Breast epithelium (tissue), 4 donors: ENCODE measurements at regions of chr6 and their contacts with region 1.

Region 1: GRCh38 chr6:119575721-119576120 is 226.2 kb upstream of the MAN1A1 start:
- DNase-seq: no peak
- H3K4me3 ChIP-seq: no peak overlapping the region
- H3K27ac ChIP-seq: no peak overlapping the region
- H3K4me1 ChIP-seq: no peaks in the 10 kb centered on the region
- H3K27me3 ChIP-seq: no peaks in the 10 kb centered on the region
- CTCF ChIP-seq: no peak
- POLR2A ChIP-seq: no peak

Region 2: DNA sequence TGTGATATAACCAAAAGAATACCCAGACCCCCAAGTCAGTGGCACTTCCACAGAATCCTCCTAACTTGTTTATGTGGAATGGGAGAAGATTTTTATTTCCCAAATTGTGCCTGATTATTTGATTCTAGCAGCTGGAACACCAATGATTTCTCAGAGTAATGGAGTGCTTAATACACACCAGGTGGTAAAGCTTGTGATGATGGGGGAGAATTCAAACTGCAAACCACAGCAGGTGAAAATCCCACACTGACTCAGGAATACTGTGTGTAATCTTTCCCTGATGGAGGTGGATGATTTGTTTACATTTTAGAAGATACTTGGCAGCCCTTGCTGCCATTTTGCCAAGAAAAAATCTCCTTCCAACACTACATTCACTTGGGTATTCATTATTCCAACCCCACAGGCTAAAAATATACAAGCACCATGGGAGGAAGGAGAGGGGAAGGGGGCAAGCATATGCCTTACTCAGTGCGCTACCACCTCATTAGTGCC is 1240.3 kb before region 1 on chr6:
- intact Hi-C with region 1: no loop called
- DNase-seq: no peak
- H3K4me3 ChIP-seq: no peak overlapping the region
- H3K27ac ChIP-seq: no peak overlapping the region
- H3K4me1 ChIP-seq: no peaks in the 10 kb centered on the region
- H3K27me3 ChIP-seq: no peaks in the 10 kb centered on the region
- CTCF ChIP-seq: no peak
- POLR2A ChIP-seq: no peak

Region 3: DNA sequence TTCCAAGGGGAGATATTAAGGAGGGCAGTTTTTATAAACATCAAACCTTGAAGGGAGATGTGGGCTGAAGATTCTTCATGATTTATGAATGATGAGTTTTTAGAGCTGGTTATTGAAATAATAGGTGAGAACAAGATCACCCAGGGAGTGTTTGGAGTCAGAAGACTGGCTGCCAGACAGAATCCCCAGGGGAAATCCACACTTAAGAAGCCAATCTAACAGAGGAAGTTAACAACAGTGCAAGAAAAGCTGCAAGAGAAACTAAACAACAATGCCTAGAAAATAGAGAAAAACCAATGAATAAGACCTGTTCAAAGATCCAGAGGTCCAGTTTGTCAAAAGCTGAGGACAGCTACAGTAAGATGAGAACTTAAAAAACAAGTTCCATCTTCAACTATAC is 58.3 kb before region 1 on chr6:
- intact Hi-C with region 1: no loop called
- DNase-seq: no peak
- H3K4me3 ChIP-seq: no peak overlapping the region
- H3K27ac ChIP-seq: no peak overlapping the region
- H3K4me1 ChIP-seq: no peaks in the 10 kb centered on the region
- H3K27me3 ChIP-seq: no peaks in the 10 kb centered on the region
- CTCF ChIP-seq: no peak
- POLR2A ChIP-seq: no peak

Region 4: DNA sequence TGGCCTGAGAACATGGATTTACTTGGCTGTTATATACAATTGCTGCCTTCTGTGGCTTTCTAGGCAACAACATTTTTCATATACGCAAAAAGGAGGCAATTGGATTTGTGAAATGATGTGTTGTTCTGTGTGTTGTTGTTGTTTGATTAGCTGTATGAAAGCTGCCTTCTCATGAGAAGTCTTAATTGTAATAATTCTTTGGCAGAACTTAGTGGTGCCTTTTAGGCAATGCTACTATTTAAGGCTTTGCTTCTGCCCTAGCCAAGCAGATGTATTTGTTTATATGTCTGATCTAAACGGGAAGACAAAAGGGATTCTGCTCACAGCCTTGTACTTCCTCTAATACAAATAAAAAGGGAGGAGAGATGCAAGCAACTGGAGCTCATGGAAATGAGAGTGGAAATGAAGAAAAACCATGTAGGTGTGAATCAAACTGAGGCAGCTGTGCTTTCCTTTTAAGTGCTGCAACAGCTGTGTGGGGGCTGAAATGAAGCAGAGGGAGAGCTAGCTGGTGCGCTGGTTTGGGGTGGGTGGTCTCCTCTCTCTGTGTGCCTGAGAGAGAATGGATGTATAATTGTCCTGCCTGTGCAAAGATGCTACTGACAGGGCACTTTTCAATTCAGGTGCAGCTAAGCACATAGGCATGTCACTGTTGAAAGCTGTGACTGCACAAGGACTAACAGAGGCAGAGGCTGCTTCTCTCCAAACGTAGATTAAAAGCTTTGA is 160.7 kb after region 1 on chr6:
- intact Hi-C with region 1: no loop called
- DNase-seq: no peak
- H3K4me3 ChIP-seq: no peak overlapping the region
- H3K27ac ChIP-seq: no peak overlapping the region
- H3K4me1 ChIP-seq: no peaks in the 10 kb centered on the region
- H3K27me3 ChIP-seq: no peaks in the 10 kb centered on the region
- CTCF ChIP-seq: no peak
- POLR2A ChIP-seq: no peak

Region 5: DNA sequence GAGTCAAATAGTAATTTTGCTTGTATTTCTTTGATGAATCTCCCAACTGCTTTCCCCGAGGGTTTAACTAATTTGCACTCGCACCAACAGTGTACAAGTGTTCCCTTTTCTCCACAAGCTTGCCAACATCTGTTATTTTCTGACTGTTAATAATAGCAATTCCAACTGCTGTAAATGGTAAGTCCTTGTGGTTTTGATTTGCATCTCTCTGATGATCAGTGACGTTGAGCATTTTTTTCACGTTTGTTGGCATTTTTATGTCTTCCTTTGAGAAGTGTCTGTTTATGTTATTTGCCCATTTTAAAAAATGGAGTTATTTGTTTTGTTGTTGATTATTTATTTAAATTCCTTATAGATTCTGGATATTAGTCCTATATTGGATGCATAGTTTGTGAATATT is 173.6 kb after region 1 on chr6:
- intact Hi-C with region 1: loop called (anchors 5 kb)
- DNase-seq: no peak
- H3K4me3 ChIP-seq: no peak overlapping the region
- H3K27ac ChIP-seq: no peak overlapping the region
- H3K4me1 ChIP-seq: no peaks in the 10 kb centered on the region
- H3K27me3 ChIP-seq: no peaks in the 10 kb centered on the region
- CTCF ChIP-seq: no peak
- POLR2A ChIP-seq: no peak